CD8-positive, alpha-beta T cell (primary cell): ENCODE measurements at regions of chr18 and their contacts with region 1.

Region 1: DNA sequence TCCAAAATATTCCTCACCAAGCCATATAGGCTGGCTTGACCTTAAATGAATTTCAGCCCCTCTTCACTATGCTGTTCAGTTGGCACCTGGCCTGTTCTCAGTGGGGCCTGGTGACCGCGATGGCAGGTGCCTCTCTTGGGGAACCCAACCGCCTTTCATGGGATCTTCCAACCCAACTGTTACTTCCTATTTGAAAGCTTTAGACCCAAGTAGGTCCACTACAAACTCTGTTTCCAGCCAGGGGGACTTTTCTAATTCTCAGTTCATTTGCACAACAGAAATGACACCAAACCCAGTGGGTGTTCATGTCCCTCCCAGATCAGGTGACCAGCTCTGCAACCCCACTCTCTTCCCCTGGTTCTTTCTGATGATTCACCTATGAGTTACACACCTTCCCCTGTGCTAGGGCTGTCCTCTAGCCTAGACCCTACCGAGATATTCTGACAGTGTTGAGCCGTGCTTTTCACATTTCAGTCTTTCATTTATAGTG is 35.6 kb upstream of the NDUFV2 start:
- DNase-seq: no peak
- ATAC-seq: no peak
- H3K4me3 ChIP-seq: no peak overlapping the region
- H3K4me3 Mint-ChIP-seq: no peak overlapping the region
- H3K27ac ChIP-seq: no peak overlapping the region
- H3K27ac Mint-ChIP-seq: no peak overlapping the region
- H3K4me1 ChIP-seq: no peaks in the 10 kb centered on the region
- H3K4me1 Mint-ChIP-seq: no peaks in the 10 kb centered on the region
- H3K27me3 ChIP-seq: no peaks in the 10 kb centered on the region
- H3K27me3 Mint-ChIP-seq: no peaks in the 10 kb centered on the region
- CTCF ChIP-seq: no peak

Region 2: DNA sequence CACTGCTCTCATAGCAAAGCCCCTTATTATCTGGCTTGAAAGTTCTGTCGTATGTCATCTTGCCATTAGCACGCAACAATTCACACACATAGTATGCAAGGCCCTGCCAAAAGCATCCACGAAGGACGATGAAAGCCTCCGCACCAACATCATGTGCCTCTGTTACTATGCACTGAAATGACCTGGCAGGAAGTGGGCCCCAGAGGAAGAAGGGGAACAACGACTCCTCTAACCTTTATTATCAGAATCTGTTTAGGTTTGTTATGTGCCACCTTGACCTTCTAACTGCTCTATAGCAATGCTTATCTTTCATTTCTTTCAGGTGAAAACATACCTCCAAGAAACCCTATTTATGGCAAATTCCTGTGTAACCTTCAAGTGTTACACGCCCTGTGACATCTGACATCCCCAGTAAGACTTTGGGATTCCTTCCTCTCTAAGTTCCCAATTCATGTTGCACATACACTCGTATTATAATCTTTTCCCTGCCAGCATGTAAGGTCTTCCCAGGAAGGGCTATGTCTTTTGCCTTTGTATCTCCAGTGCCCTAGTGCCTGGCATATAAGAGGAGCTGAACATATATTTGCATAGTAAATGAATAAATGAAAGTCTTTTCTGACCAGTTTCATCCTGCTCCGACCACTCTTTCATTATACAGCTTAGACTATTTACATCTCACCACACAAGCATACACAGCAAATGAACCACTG is 28.6 kb after region 1 on chr18:
- CTCF ChIA-PET with region 1: no interaction called
- POLR2A ChIA-PET with region 1: no interaction called
- intact Hi-C with region 1: loop called in 1 of 2 experiments (anchors 2 kb)
- DNase-seq: peak in 8 of 9 experiments; percentile 37 to 78 (median 58)
- ATAC-seq: peak; percentile 61
- H3K4me3 ChIP-seq: peak overlapping the region in 1 of 2 experiments; percentile 16
- H3K4me3 Mint-ChIP-seq: peak overlapping the region; percentile 40
- H3K27ac ChIP-seq: peak overlapping the region; percentile 50 to 58
- H3K27ac Mint-ChIP-seq: peak overlapping the region; percentile 90
- H3K4me1 ChIP-seq: peaks cover 43% of the 10 kb centered on the region
- H3K4me1 Mint-ChIP-seq: peaks cover 50% of the 10 kb centered on the region
- H3K27me3 ChIP-seq: no peaks in the 10 kb centered on the region
- H3K27me3 Mint-ChIP-seq: no peaks in the 10 kb centered on the region
- CTCF ChIP-seq: no peak

Region 3: DNA sequence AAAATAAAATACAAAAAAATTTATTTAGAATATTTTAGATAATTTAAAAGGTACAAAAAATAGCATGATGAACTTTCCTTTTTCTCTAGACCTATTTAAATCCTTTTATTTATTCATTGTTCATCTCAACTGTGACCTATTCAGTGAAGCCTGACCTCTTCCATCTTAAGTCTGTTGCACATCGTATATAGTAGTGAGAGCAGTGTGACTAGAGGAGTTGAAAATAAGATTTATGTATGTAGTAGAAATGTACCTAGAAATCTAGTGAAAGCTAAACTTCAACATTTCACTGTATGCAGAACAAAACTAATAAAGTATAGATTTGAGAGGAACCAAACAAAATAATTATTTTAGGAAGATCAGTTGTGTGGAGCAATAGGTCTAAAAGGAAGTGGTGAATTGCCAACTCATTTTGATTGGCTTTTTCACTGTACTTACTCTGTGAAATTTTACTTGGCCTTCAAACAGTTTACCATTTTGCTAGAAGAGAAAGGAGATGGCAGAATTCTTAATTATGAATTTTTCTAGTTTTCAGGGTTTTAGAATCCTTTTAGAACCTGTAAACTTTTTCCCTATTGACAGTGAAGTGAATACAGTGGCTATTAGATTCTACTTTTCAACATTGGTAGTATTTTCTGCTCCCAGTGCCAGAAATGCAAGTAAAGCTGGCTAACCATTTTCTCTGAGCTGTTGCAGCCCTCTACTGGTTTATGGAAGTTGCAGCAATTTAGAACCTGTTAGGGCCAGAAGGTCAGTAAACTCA is 80.8 kb after region 1 on chr18:
- CTCF ChIA-PET with region 1: interaction called, 27 read pairs
- POLR2A ChIA-PET with region 1: no interaction called
- intact Hi-C with region 1: no loop called
- DNase-seq: peak in 4 of 9 experiments; percentile 22 to 82 (median 52)
- ATAC-seq: peak; percentile 76
- H3K4me3 ChIP-seq: no peak overlapping the region
- H3K4me3 Mint-ChIP-seq: no peak overlapping the region
- H3K27ac ChIP-seq: peak overlapping the region in 1 of 2 experiments; percentile 63
- H3K27ac Mint-ChIP-seq: peak overlapping the region; percentile 84
- H3K4me1 ChIP-seq: peaks cover 45% of the 10 kb centered on the region
- H3K4me1 Mint-ChIP-seq: peaks cover 77% of the 10 kb centered on the region
- H3K27me3 ChIP-seq: no peaks in the 10 kb centered on the region
- H3K27me3 Mint-ChIP-seq: no peaks in the 10 kb centered on the region
- CTCF ChIP-seq: peak; percentile 71

Region 4: DNA sequence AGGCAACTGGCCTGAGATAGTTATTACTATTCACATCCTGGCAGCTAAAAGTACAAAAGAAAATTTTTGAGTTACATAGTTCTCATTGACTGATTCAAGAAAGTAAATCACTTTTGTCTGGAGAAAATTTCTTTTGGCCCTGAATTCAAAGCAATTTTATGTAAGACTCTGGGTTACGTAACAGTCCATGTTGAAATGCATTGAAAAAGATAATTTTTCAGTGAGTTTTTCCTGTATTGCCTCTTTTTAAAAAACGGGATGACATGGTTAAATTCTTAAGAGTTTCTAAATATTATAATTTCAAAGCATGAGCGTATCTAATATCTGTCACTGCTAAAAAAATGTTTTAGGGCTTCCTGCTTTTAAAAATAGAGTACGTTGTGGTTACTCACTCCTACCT is 142.4 kb after region 1 on chr18:
- CTCF ChIA-PET with region 1: no interaction called
- POLR2A ChIA-PET with region 1: no interaction called
- intact Hi-C with region 1: loop called in 1 of 2 experiments (anchors 5 kb)
- DNase-seq: no peak
- ATAC-seq: no peak
- H3K4me3 ChIP-seq: no peak overlapping the region
- H3K4me3 Mint-ChIP-seq: no peak overlapping the region
- H3K27ac ChIP-seq: no peak overlapping the region
- H3K27ac Mint-ChIP-seq: no peak overlapping the region
- H3K4me1 ChIP-seq: no peaks in the 10 kb centered on the region
- H3K4me1 Mint-ChIP-seq: peaks cover 17% of the 10 kb centered on the region
- H3K27me3 ChIP-seq: no peaks in the 10 kb centered on the region
- H3K27me3 Mint-ChIP-seq: no peaks in the 10 kb centered on the region
- CTCF ChIP-seq: no peak